IMR-90 (cell line): ENCODE measurements at regions of chr10 and their contacts with region 1.

Region 1: DNA sequence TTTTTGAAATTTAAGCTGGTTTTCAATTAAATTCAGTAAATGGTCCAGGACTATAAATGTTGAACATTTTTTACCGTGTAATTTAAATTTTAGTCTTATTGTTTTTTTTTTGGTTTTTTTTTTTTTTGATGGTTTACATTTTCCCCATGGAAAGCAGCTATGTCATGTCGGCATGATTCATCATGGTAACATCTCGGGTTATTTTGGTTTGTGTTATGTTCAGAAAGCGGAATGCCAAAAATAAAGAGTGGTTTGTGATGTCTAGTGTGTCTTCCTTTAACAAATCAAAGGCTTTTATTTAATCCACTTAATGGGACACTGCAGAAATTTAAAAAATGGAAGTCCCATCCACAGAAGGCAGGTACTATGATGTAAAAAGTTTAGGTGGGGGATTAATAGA is 58.5 kb downstream of the TRUB1 start:
- DNase-seq: peak; percentile 81
- ATAC-seq: peak; percentile 56
- H3K4me3 ChIP-seq: no peak overlapping the region
- H3K27ac ChIP-seq: no peak overlapping the region
- H3K4me1 ChIP-seq: peaks cover 7% of the 10 kb centered on the region
- H3K27me3 ChIP-seq: no peaks in the 10 kb centered on the region
- CTCF ChIP-seq: no peak
- POLR2A ChIP-seq: no peak
- RAD21 ChIP-seq: no peak

Region 2: DNA sequence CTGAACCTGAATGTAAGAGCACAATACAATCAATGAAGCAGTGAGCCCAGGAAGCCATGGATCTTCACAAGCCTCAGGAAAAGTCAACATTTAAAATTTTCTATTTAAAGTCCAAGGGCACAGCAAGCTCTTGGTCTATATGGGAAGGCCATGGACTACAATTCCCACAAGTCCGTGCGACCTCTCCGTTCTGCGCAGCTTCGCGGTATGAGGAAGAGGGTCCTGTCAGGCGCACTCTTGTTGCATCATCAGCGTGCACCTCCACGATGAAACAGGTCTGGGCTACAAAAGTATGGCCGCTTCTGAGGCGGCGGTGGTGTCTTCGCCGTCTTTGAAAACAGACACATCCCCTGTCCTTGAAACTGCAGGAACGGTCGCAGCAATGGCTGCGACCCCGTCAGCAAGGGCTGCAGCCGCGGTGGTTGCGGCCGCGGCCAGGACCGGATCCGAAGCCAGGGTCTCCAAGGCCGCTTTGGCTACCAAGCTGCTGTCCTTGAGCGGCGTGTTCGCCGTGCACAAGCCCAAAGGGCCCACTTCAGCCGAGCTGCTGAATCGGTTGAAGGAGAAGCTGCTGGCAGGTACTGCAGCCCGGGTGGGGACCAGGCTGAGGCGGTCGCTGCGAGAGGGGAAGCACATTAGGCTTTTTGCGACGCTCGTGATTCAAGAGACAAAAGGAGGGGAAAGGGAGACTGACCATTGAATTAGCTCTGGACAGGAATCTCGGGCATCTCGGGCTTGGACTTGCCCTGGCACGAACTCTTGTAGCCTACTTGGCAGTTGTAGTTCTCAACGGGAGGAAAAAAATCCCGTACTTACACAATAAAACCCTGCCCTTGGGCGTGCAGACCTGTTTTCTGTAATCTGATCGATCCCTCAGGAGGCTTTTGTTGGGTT is 58.3 kb before region 1 on chr10 and contains the start of gene TRUB1:
- CTCF ChIA-PET with region 1: no interaction called
- POLR2A ChIA-PET with region 1: interaction called, 4 read pairs
- dilution Hi-C with region 1: no loop called
- in situ Hi-C with region 1: no loop called
- intact Hi-C with region 1: loop called (anchors 1 kb)
- DNase-seq: peak; percentile 98
- ATAC-seq: peak; percentile 99
- H3K4me3 ChIP-seq: peak within 1 kb of the TSS; percentile 72
- H3K27ac ChIP-seq: peak within 1 kb of the TSS; percentile 85
- H3K4me1 ChIP-seq: peaks cover 3% of the 10 kb centered on the region
- H3K27me3 ChIP-seq: no peaks in the 10 kb centered on the region
- CTCF ChIP-seq: no peak
- POLR2A ChIP-seq: peak; percentile 48; the same call in 1 of the 2 replicates
- RAD21 ChIP-seq: no peak
- total RNA-seq, gene TRUB1: 17.9 and 26.1 TPM in 2 replicates

Region 3: DNA sequence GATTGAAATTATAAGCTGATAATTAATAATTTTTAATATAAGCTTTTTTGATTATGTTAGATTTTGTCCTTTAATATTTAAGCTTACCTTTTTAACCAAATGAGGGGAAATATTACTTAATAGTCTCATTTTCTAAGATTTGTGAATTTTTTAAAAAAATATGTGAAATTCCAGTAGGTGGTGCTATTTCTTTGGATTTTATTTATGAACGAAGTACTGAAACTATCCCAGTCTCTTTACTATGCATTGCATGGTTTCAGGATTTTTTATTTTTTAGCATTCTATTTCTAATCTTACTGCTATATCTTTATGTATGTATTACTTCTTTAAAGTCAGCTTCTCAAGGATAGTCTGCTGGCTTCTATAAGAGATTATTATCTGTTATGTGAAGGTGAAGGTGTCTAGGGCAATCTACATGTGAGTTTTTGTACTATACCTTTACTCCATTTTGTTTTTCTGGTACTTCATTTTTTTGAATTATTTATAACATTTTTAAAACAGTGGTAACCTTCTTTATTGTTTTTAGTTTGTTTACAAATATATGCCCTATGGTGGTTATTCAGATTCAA is 174.9 kb after region 1 on chr10:
- CTCF ChIA-PET with region 1: no interaction called
- POLR2A ChIA-PET with region 1: no interaction called
- dilution Hi-C with region 1: no loop called
- in situ Hi-C with region 1: no loop called
- intact Hi-C with region 1: no loop called
- DNase-seq: no peak
- ATAC-seq: no peak
- H3K4me3 ChIP-seq: no peak overlapping the region
- H3K27ac ChIP-seq: no peak overlapping the region
- H3K4me1 ChIP-seq: no peaks in the 10 kb centered on the region
- H3K27me3 ChIP-seq: no peaks in the 10 kb centered on the region
- CTCF ChIP-seq: peak; percentile 49
- POLR2A ChIP-seq: no peak
- RAD21 ChIP-seq: no peak